GM13977 (cell line): ENCODE measurements at regions of chr14 and their contacts with region 1.

Region 1: DNA sequence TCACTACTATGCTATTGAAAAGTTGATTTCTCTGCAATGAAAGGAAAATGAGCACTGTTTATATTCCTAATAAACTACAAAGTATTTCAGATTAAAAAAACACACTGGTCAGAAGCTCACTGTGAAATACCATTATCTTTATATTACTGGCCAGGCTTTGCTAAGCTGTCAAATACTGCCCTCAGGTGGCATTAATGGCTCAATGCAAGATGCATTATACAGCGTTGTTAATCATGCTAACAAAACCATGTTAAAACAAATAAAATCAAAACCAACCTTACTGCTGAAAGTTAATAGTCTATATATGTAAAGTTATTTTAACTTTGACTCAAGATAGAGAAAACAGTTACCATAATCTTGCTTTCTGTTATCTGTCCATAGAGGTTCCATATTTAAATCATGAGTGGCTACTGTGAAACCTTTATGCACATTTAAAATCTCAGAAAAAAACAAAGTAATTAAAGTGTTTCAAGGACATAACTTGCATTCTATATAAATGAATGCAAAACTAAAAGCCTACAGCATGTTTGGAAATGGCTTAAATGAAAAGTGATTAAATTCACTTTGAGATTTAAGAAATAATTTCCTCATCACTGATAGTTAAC is 121.7 kb downstream of the RALGAPA1 start:
- DNase-seq: peak; percentile 17
- CTCF ChIP-seq: peak; percentile 84

Region 2: DNA sequence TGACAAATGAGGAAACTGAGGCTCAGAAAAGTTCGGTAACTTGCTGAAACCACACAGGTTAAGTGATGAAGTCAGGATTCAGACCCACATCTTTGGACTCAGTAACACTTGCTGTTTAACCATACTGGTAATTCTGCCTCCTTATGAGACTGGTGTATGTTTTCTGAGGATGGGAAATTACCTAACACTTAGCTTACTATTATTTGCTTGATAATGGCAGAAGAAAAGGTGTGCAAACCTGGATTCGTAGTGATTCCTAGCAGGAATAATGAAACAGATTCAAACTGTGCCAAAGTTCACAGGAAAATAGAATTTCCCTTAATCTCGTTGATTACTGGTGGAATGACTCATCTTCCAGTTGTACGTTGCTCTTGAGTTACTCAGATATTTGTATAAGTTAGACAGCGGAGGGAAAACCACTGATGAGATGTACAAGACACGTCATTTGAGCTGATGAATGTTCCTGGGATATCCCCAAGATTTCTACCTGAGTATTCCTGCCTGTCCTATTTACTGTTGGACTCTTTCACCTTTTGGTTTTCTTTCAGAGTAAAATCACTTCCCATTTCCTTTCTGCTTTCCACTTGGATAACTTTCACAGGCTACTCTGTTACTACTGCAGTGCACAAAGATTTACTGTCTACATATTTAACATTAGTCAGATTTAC is 527.6 kb before region 1 on chr14:
- in situ Hi-C with region 1: loop called (anchors 25 kb)
- DNase-seq: no peak
- CTCF ChIP-seq: no peak

Region 3: DNA sequence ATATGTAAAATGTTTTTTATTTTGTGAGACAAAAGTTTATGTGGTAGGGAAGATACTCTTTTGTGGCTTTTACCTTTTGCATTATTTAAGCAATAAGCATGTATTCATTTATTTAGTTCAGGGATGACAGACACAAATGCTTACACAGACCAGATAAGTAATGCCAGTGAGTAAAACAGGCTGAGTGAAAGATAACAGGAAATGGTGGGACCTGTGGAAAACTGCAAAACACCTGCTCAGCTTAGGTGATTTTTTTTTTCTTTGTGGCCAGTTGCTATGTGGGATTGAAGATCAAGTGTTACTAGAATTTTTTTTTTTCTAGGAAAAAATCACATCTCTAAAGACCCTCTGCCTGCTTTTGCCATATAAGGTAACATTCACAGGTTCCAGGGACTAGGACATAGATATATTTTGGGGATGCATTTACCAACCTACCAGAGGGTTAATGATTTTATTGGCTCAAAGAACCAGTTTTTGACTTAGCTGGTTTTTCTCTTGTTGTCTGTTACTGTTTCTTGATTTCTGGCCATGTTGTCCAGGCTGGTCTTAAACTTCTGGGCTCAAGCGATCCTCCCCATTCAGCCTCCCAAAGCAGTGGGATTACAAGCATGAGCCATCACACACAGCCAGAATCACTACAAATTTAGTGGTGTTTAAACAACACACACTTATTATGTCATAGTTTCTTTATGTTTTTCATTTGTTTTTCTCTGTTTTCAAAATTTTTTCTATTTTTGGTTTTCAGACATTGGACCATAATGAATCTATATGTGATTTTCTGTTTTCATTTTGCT is 385.5 kb before region 1 on chr14:
- in situ Hi-C with region 1: no loop called
- DNase-seq: no peak
- CTCF ChIP-seq: no peak

Region 4: DNA sequence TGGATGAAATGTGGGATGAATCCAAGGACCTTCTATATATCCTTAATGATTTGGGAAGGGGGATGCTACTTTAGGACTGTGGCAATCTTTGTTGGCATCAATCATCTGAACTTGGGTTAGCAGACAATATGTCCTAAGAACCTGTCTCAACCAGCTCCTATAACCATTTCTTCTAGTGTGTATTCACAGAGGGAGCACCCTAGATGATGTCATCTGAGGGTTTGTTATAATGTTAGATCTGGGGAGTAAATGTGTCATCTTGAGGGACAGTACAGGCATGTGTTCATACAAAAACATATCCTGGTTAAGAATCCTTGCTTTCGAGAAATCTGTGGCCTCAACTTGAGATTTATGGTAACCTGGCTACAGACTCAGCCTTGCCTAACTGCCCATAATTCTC is 241.0 kb before region 1 on chr14:
- in situ Hi-C with region 1: loop called (anchors 10 kb)
- DNase-seq: no peak
- CTCF ChIP-seq: no peak